ENCODE measurements at regions of chr7 and their contacts with region 1.

Region 1: DNA sequence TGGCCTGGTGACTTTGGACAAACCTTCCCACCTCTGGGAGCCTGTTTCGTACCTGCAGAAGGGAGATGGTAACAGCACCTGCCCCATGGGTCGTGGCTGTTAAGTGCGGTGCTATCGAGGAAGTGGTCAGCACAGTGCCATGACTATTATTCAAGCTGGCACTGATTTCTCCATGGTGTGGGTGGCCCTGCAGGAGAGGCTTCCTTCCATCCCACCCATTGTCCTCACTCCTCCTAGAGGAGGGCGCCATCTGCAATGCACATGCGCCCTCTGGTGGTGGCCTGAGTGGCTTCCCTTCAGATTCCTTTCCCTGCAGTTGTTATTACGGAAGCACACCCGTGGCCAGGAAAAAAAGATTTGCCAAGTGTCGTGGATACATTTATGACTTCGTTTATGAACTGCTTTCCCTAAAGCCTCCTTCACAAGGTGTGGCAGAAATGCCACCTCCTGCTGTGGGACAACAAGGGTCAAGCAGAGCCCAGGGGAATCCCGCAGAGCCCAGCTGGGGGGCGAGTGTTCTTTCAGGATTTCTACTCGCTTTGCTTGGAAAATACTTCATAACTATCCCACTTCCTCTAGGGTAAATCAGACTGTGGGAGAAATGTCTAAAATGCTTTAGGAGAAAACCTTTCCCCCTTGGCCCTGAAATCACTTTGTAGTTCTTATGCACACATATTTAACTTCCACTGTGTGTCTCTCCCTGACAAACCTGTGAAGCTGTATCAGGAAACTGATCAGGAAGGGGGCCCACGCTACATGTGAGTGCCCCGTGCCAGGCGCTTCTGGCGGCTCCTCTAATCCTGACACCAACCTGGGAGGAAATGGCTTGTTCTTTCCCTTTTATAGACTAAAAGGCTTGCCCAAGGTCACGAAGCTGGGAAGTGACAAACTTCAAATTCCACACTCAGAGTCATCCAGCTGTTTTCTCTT is 98.0 kb upstream of the ANLN start:
- DNase-seq: peak; percentile 52
- H3K4me3 ChIP-seq: peak overlapping the region; percentile 1 to 41 (median 14)
- H3K27ac ChIP-seq: no peak overlapping the region
- H3K4me1 ChIP-seq: peaks cover 10% of the 10 kb centered on the region
- H3K27me3 ChIP-seq: no peaks in the 10 kb centered on the region
- CTCF ChIP-seq: peak; percentile 97 to 99

Region 2: DNA sequence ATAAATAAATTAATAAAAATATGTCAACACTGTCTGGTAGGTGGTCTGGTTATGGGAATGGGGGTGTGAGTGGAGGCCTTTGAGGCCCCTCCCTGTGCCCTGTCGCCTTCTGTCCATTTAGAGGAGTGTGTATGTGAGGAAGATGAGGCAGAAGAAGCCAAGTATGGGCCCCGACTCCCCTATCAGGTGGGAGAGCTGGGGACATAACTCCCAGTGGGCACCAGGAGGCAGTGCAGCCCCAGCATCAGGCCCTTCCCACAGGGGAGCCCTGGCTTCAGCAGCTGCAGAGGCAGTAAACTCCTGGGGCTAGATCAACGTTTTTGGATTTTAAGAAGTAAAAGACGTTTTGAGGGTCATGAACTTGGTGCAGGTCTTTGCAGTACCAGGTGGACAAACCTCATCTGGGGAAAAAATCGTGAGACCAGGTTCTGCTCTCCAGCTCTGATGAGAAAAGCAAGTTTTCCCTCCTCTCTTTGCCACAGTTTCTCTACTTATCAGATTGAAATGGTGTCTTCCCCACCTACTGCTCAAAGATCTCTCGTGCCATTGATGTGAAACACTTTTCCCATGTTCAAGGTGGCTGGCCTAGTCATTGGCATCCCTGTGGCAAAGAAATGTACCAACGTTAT is 306.4 kb before region 1 on chr7:
- CTCF ChIA-PET with region 1: interaction called, 6 read pairs
- dilution Hi-C with region 1: loop called (anchors 5 kb)
- in situ Hi-C with region 1: loop called (anchors 5 kb)
- intact Hi-C with region 1: loop called (anchors 1 kb)
- DNase-seq: peak; percentile 38
- H3K4me3 ChIP-seq: no peak overlapping the region
- H3K27ac ChIP-seq: no peak overlapping the region
- H3K4me1 ChIP-seq: no peaks in the 10 kb centered on the region
- H3K27me3 ChIP-seq: peaks cover 2% of the 10 kb centered on the region
- CTCF ChIP-seq: peak; percentile 95 to 99

Region 3: GRCh38 chr7:36084475-36085097 is 207.1 kb before region 1 on chr7:
- CTCF ChIA-PET with region 1: no interaction called
- dilution Hi-C with region 1: no loop called
- in situ Hi-C with region 1: no loop called
- intact Hi-C with region 1: loop called (anchors 5 kb)
- DNase-seq: no peak
- H3K4me3 ChIP-seq: no peak overlapping the region
- H3K27ac ChIP-seq: no peak overlapping the region
- H3K4me1 ChIP-seq: no peaks in the 10 kb centered on the region
- H3K27me3 ChIP-seq: peaks cover 3% of the 10 kb centered on the region
- CTCF ChIP-seq: peak in 1 of 2 donors; percentile 39

Region 4: DNA sequence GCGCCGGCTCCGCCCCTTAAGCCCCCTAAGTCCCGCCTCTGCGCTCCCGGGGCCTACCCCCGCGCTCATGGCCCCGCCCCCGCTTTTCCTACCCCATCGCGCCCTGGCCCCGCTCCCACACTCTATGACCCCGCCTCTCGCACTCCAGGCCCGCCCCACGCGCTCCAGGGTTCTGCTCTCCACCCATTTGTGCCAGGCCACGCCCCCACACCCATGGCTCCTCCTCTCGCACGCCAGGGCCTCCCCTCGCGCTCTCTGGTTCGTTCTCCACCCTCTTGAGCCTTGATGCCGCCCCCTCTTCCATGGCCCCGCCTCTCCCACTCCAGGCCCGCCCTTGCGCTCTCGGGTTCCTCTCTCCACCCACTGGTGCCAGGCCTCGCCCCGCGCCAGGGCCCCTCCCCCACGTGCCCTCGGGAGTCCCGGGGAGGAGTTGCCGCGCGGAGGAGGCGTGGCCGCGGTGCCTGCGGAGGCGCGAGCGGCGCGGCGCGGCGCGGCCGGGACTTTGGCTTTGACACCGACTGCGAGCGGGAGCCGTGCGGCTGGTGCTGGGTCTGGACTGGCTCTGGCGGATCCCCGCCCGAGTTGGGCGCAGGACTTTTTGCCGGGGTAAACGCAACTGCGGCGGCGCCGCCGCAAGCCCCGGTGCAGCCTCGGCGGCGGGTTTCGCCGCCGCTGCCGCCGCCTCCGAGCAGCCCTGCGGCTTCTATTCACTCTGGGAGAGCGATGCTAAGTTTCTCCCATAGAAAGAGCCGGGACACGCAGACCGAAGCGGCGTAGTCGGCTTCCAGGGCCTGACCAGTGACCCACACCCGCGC is 138.7 kb before region 1 on chr7 and contains the start of gene EEPD1:
- CTCF ChIA-PET with region 1: no interaction called
- dilution Hi-C with region 1: no loop called
- in situ Hi-C with region 1: no loop called
- intact Hi-C with region 1: loop called (anchors 5 kb)
- DNase-seq: peak; percentile 99
- H3K4me3 ChIP-seq: peak within 1 kb of the TSS; percentile 67 to 79 (median 74)
- H3K27ac ChIP-seq: peak within 1 kb of the TSS; percentile 24
- H3K4me1 ChIP-seq: peaks cover 18% of the 10 kb centered on the region
- H3K27me3 ChIP-seq: no peaks in the 10 kb centered on the region
- CTCF ChIP-seq: no peak
- total RNA-seq, gene EEPD1: 1.9 to 2.0 TPM